Posterior vena cava (tissue), 2 donors: ENCODE measurements at regions of chr18 and their contacts with region 1.

Region 1: GRCh38 chr18:7177116-7177744 is 53.7 kb upstream of the LRRC30 start:
- DNase-seq: no peak

Region 2: GRCh38 chr18:7038330-7038851 is 138.8 kb before region 1 on chr18:
- intact Hi-C with region 1: loop called in 1 of 2 experiments (anchors 10 kb)
- DNase-seq: peak; percentile 95